ENCODE measurements at regions of chr10 and their contacts with region 1.

Region 1: DNA sequence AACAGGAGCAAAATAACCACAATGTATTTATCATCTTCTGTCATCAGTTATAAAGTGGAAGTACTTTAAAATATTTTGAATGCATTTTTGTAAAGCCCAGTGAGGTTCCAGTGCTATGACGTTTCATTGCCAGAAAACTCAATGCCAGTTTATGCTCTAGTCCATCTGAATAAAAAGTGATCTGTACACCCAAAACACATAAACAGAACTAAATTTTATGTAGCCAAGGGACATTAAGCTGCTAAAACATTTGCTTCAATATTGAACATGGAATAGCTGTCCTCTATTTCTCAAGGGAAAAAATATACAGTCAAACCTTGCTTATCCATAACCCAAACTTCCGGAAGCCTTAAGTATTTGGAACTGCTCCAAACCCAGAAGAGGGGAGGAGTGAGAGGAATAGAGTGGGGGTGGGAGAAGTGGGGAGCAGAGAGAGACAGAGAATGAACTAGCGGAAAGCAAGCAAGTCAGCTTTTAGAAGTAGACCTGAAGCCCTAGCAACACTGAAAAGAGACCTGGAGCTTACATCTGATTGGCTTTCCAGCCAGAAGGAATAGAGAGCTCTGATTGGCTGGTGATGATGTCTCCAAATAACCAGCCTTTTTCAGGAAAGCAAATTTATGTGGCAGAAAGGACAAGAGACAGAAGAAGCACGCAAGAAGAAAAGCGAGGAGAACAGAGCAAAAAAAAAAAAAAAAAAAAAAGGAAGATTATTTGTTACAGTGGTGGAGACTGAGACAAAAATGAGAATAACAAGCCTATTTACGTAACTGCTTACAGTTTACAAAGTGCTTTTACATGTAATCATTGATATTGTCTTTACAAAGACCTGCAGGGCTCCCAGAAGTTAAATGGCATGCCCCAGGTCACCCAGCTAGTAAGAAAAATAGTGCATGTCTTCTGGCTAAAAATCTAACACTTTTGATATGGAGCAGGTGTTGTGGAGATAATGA is 196.0 kb downstream of the RNLS start:
- DNase-seq: peak; percentile 91
- H3K4me3 ChIP-seq: peak overlapping the region; percentile 65
- H3K27ac ChIP-seq: peak overlapping the region; percentile 99
- H3K4me1 ChIP-seq: peaks cover 85% of the 10 kb centered on the region
- CTCF ChIP-seq: no peak

Region 2: GRCh38 chr10:87875929-87876571 is 511.0 kb before region 1 on chr10:
- CTCF ChIA-PET with region 1: no interaction called
- POLR2A ChIA-PET with region 1: interaction called, 10 read pairs
- intact Hi-C with region 1: no loop called
- DNase-seq: no peak
- H3K4me3 ChIP-seq: no peak overlapping the region
- H3K27ac ChIP-seq: no peak overlapping the region
- H3K4me1 ChIP-seq: peaks cover 42% of the 10 kb centered on the region
- CTCF ChIP-seq: no peak

Region 3: GRCh38 chr10:87991946-87992345 is 395.2 kb before region 1 on chr10:
- CTCF ChIA-PET with region 1: no interaction called
- POLR2A ChIA-PET with region 1: no interaction called
- intact Hi-C with region 1: no loop called
- DNase-seq: no peak
- H3K4me3 ChIP-seq: no peak overlapping the region
- H3K27ac ChIP-seq: no peak overlapping the region
- H3K4me1 ChIP-seq: no peaks in the 10 kb centered on the region
- CTCF ChIP-seq: no peak

Region 4: DNA sequence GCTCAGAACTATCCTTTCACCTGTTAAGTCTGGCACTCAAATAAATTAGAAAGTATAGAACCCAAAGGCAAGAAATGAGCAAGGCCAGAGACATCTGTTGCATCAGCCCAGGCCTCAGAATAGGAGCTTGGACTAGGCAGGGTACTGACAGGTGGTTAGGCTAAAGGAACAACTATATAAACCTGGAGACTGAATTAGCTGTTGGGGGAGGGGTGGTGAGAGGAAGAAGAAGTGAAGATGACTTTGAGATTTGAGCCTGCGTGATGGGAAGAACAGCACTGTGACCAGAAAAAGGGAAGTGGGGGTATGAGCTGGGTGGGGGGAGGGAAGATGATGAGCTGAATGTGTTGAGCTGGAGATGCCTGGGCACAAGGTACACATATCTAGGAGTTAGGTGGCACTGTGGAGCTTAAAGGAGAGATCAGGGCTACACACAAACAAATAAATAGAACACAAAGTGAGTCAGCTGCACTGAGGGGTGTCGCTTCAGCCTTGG is 278.9 kb before region 1 on chr10:
- CTCF ChIA-PET with region 1: interaction called, 7 read pairs
- POLR2A ChIA-PET with region 1: interaction called, 62 read pairs
- intact Hi-C with region 1: loop called (anchors 1 kb)
- DNase-seq: peak; percentile 99
- H3K4me3 ChIP-seq: peak overlapping the region; percentile 31
- H3K27ac ChIP-seq: peak overlapping the region; percentile 96
- H3K4me1 ChIP-seq: peaks cover 94% of the 10 kb centered on the region
- CTCF ChIP-seq: peak; percentile 85

Region 5: DNA sequence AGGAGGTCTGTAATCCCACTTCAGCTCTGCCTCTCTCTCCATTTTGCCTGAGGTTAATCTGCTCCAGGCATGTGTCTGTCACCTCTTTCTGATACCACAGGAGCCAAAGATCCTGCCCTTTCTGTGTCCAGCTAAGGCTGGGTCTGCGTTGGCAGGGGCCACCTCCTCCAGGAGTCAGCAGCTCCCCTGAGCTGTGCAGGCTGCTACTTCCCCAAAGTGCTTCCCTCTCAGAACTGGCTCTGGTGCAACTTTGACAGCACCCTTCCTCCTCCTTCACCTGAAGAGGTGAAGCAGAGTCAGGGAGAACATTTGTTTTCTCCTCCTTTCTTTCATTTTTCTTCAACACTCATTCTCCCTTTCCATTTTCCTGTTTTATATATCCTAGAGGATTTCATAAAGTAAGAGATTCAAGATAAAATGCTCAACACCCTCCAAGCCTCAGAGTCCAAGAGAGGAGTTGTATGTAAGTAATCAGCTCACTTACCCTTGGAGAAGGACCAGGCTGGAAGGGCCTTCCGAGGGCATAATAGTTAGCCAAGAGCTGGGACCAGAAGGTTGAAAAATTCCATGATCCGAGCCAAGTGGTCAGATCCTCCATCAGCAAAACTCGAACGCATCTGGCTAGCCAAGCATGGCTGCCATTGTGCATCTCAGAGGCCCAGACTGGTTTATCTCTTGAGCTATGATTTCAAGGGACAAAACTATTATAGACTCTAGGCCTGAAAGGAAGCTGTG is 266.3 kb before region 1 on chr10:
- CTCF ChIA-PET with region 1: interaction called, 6 read pairs
- POLR2A ChIA-PET with region 1: interaction called, 62 read pairs
- intact Hi-C with region 1: no loop called
- DNase-seq: peak; percentile 59
- H3K4me3 ChIP-seq: peak overlapping the region; percentile 42
- H3K27ac ChIP-seq: peak overlapping the region; percentile 34
- H3K4me1 ChIP-seq: peaks cover 78% of the 10 kb centered on the region
- CTCF ChIP-seq: no peak

Region 6: GRCh38 chr10:88330174-88330573 is 56.9 kb before region 1 on chr10:
- CTCF ChIA-PET with region 1: no interaction called
- POLR2A ChIA-PET with region 1: interaction called, 16 read pairs
- intact Hi-C with region 1: no loop called
- DNase-seq: no peak
- H3K4me3 ChIP-seq: no peak overlapping the region
- H3K27ac ChIP-seq: no peak overlapping the region
- H3K4me1 ChIP-seq: peaks cover 30% of the 10 kb centered on the region
- CTCF ChIP-seq: no peak

Region 7: DNA sequence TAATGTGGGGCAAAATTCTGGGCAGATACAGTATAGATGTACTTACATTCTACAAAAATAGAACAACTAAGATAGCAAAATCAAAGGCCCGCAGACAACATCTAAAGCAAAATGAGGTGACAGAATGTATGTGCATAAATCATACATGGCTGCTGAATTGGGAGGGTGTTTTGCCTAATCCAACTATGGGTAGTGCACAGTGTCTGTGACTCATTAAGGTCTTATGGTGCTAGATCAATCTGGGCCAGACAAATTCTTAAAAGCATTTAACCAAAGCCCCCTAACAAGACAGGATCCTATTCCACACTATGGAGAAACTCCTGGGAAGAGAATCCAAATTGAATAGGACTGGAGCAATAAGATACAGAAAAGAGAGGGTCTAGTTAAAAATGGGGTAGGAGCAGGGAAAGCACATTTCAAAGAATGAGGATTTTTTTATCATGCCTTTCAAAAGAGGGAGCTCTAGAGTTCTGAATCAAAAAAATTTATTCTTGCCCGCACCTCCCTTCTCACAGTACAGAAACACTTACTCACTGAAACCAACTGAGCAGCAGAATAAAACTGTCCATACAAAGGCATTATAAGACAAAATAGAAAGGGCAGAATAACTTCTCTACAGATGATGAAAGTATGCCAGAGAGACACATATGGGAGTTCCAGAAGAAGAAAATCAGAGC is 14.7 kb after region 1 on chr10:
- CTCF ChIA-PET with region 1: interaction called, 3 read pairs
- POLR2A ChIA-PET with region 1: interaction called, 11 read pairs
- intact Hi-C with region 1: no loop called
- DNase-seq: no peak
- H3K4me3 ChIP-seq: no peak overlapping the region
- H3K27ac ChIP-seq: no peak overlapping the region
- H3K4me1 ChIP-seq: no peaks in the 10 kb centered on the region
- CTCF ChIP-seq: peak; percentile 73

Measured in OCI-LY7 (cell line).